GM13977 (cell line): ENCODE measurements at regions of chr7 and their contacts with region 1.

Region 1: DNA sequence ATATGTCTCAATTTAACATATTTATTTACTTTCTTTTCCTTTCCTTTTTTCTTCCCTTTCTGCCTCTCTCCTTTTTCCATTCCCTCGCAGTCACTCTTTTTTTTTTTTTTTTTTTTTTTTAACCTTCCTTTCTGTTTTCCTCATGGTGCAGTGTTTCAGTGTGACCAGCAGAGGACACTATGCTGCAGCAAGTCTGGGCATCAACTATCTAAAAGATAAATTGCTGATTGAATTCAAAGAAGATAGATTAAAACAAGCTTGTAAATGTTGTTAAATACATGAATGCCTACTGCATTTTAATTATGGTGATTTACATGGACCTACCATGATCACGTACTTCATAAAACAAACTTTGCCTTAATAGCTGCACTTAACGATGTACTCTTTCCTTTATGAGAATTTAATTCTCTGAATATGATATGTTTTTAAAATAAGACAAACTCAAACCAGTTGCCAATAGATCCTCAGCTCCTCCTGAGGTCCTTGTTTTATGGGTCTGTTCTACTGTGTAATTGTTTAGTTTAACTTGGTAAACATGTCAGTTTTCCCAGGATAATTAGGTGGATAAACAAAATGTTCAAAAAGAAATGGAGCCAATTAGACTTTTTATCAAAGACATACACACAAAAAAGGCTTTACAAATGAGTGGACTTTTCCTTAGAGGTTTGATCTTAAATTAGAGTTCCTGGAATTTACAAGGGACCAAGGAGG is 101.0 kb upstream of the AGR3 start:
- DNase-seq: no peak
- CTCF ChIP-seq: peak; percentile 83

Region 2: GRCh38 chr7:17530741-17531417 is 548.1 kb after region 1 on chr7:
- in situ Hi-C with region 1: loop called (anchors 25 kb)
- DNase-seq: peak; percentile 20
- CTCF ChIP-seq: peak; percentile 46

Region 3: GRCh38 chr7:17651926-17652385 is 669.2 kb after region 1 on chr7:
- in situ Hi-C with region 1: loop called (anchors 25 kb)
- DNase-seq: no peak
- CTCF ChIP-seq: no peak